Activated naive CD4-positive, alpha-beta T cell treated with anti-CD3 and anti-CD28 coated beads for 36 hours (primary cell): ENCODE measurements at regions of chr19 and their contacts with region 1.

Region 1: GRCh38 chr19:13952154-13953035 is at the start of gene DCAF15:
- DNase-seq: peak; percentile 100
- H3K4me3 Mint-ChIP-seq: peak within 1 kb of the TSS; percentile 96
- H3K27ac Mint-ChIP-seq: peak within 1 kb of the TSS; percentile 84
- H3K4me1 Mint-ChIP-seq: peaks cover 17% of the 10 kb centered on the region
- H3K27me3 Mint-ChIP-seq: no peaks in the 10 kb centered on the region
- total RNA-seq, gene DCAF15: 67.7 to 70.6 TPM

Region 2: DNA sequence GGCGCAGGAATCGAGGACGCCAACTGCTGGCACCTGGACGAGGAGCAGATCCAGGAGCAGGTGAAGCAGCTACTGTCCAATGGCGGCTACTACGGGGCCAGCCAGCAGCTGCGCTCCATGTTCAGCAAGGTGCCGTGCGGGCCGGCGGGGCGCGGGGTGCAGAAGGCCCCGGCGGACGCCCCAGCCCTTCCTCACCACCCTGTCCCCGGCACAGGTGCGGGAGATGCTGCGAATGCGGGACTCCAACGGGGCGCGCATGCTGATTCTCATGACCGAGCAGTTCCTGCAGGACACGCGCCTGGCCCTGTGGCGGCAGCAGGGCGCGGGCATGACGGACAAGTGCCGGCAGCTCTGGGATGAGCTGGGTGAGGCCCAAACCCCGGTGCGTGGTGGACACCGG is 143.5 kb before region 1 on chr19:
- CTCF ChIA-PET with region 1: no interaction called
- intact Hi-C with region 1: no loop called
- DNase-seq: no peak
- H3K4me3 Mint-ChIP-seq: no peak overlapping the region
- H3K27ac Mint-ChIP-seq: no peak overlapping the region
- H3K4me1 Mint-ChIP-seq: no peaks in the 10 kb centered on the region
- H3K27me3 Mint-ChIP-seq: no peaks in the 10 kb centered on the region

Region 3: DNA sequence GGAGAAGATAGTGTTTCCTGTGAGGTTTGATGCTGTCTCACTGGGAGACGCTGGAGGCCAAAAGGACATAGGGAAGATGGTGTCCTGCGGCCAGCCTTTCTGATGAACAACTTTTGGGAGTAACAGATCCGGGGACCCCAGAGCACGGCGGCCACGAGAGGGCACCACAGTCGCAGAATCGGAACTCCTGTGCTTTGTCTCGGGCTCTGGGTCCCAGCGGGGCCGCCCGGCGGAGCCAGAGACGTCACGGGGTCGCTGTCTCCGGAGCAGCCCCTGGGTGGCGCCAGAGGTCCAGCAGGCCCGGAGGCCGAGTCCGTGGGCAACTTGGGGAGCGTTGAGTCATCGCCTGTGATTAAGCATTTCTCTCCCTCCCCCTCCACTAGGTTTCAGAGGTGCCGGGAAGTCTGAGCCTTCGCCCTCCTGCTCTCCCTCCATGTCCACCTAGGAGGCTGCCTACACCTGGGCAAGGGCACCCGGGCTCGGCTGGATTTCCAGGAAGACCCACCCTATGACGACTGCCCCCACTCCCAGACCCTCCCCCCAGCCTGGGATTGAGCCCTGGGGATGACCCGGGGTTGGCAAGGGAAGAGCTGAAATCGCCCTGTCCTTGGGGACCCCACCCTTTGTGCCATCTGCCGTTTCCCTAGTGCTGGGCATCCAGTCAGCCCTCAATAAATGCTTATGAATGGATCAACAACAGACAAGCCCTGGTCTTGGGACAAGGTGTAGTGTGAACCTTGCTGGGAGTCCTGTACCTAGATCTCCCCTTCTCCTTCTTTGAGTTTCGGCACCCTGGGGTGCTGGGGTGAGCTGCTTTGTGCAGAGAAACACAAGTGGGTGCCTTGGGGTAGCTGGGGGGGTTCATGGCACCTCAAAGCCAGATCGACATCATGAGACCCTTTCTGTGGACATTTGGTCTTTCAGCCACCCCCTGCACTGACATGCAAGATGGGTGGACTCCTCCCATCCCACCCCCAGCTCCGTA is 72.0 kb before region 1 on chr19:
- CTCF ChIA-PET with region 1: interaction called, 3 read pairs
- intact Hi-C with region 1: loop called (anchors 1 kb)
- DNase-seq: peak; percentile 99
- H3K4me3 Mint-ChIP-seq: peak overlapping the region; percentile 45
- H3K27ac Mint-ChIP-seq: peak overlapping the region; percentile 77
- H3K4me1 Mint-ChIP-seq: peaks cover 34% of the 10 kb centered on the region
- H3K27me3 Mint-ChIP-seq: no peaks in the 10 kb centered on the region

Region 4: DNA sequence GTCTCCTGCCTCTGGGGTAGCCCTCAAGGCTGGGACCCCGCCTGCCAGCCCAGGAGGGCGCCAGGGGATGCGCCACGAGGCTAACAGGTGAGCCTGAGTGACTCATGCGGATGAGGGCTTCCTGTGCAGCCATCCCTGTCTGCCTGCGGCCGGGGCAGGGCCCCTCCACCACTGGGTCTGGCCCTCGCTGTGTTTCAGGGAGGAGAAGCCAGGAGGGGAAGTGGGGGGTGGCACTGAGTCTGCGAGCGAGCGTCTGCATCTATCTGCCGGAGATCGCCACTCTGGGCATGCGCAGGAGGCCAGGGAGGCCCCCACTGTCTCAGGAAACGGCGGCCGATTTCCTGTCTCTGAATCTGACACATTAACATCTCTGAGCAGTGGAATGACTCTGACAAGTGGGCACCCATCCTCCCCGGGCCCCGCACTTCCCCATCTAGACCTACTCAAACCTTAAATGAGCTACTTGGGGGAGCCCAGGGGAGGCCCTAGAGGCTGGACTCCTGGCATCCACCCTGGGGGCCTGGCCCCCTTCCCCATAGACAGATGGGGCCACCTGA is 34.0 kb after region 1 on chr19:
- CTCF ChIA-PET with region 1: interaction called, 5 read pairs
- intact Hi-C with region 1: loop called (anchors 1 kb)
- DNase-seq: peak; percentile 100
- H3K4me3 Mint-ChIP-seq: peak overlapping the region; percentile 65
- H3K27ac Mint-ChIP-seq: peak overlapping the region; percentile 98
- H3K4me1 Mint-ChIP-seq: peaks cover 64% of the 10 kb centered on the region
- H3K27me3 Mint-ChIP-seq: no peaks in the 10 kb centered on the region

Region 5: DNA sequence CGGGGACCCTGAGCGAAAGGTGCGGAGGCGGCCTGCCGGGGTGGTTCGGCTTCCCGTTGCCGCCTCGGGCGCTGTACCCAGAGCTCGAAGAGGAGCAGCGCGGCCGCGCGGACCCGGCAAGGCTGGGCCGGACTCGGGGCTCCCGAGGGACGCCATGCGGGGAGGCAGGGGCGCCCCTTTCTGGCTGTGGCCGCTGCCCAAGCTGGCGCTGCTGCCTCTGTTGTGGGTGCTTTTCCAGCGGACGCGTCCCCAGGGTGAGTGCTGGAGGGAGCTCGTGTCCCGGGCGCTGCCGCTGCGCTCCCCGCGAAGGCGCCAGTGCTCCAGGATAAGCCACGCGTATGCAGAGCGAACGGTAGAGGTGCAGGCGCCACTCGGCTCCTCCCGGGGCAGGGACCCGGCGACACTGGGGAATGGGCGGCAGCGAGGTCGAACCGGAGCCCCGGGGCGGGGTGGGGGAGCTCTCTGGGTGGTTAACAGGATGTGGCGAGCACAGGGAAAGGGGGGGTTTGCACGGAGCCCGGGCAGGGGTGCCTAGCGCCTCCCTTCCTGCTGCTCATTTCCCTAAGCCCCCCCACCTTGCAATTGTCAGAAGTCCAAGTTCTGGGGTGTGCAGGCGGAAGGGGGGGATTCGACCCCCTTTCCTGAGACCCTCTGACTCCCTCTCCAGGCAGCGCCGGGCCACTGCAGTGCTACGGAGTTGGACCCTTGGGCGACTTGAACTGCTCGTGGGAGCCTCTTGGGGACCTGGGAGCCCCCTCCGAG is 79.5 kb after region 1 on chr19 and contains the start of gene IL27RA:
- CTCF ChIA-PET with region 1: interaction called, 4 read pairs
- intact Hi-C with region 1: loop called (anchors 2 kb)
- DNase-seq: peak; percentile 84
- H3K4me3 Mint-ChIP-seq: peak within 1 kb of the TSS; percentile 88
- H3K27ac Mint-ChIP-seq: peak within 1 kb of the TSS; percentile 92
- H3K4me1 Mint-ChIP-seq: peaks cover 26% of the 10 kb centered on the region
- H3K27me3 Mint-ChIP-seq: no peaks in the 10 kb centered on the region
- total RNA-seq, gene IL27RA: 59.3 to 59.4 TPM

Region 6: GRCh38 chr19:14073261-14073924 is 121.0 kb after region 1 on chr19:
- CTCF ChIA-PET with region 1: interaction called, 3 read pairs
- intact Hi-C with region 1: loop called (anchors 5 kb)
- DNase-seq: peak; percentile 75
- H3K4me3 Mint-ChIP-seq: peak overlapping the region; percentile 80
- H3K27ac Mint-ChIP-seq: no peak overlapping the region
- H3K4me1 Mint-ChIP-seq: peaks cover 10% of the 10 kb centered on the region
- H3K27me3 Mint-ChIP-seq: peaks cover 4% of the 10 kb centered on the region